ENCODE measurements at regions of chr4 and their contacts with region 1.

Region 1: GRCh38 chr4:26325191-26325590 is 4.4 kb downstream of the RBPJ start:
- DNase-seq: no peak
- H3K4me3 ChIP-seq: no peak overlapping the region
- H3K27ac ChIP-seq: no peak overlapping the region
- H3K4me1 ChIP-seq: peaks cover 23% of the 10 kb centered on the region; the same call in 1 of the 2 replicates
- H3K27me3 ChIP-seq: no peaks in the 10 kb centered on the region
- CTCF ChIP-seq: peak; percentile 50; the same call in 1 of the 2 replicates

Region 2: GRCh38 chr4:26061248-26061986 is 263.8 kb before region 1 on chr4:
- CTCF ChIA-PET with region 1: no interaction called
- POLR2A ChIA-PET with region 1: no interaction called
- intact Hi-C with region 1: loop called (anchors 1 kb)
- DNase-seq: peak; percentile 31 to 41
- H3K4me3 ChIP-seq: no peak overlapping the region
- H3K27ac ChIP-seq: no peak overlapping the region
- H3K4me1 ChIP-seq: no peaks in the 10 kb centered on the region
- H3K27me3 ChIP-seq: no peaks in the 10 kb centered on the region
- CTCF ChIP-seq: peak; percentile 73

Region 3: GRCh38 chr4:26288355-26288909 is 36.8 kb before region 1 on chr4:
- CTCF ChIA-PET with region 1: no interaction called
- POLR2A ChIA-PET with region 1: no interaction called
- intact Hi-C with region 1: no loop called
- DNase-seq: peak; percentile 20 to 90
- H3K4me3 ChIP-seq: peak overlapping the region; percentile 11; the same call in 1 of the 2 replicates
- H3K27ac ChIP-seq: peak overlapping the region; percentile 77
- H3K4me1 ChIP-seq: peaks cover 34% of the 10 kb centered on the region
- H3K27me3 ChIP-seq: no peaks in the 10 kb centered on the region
- CTCF ChIP-seq: no peak

Region 4: DNA sequence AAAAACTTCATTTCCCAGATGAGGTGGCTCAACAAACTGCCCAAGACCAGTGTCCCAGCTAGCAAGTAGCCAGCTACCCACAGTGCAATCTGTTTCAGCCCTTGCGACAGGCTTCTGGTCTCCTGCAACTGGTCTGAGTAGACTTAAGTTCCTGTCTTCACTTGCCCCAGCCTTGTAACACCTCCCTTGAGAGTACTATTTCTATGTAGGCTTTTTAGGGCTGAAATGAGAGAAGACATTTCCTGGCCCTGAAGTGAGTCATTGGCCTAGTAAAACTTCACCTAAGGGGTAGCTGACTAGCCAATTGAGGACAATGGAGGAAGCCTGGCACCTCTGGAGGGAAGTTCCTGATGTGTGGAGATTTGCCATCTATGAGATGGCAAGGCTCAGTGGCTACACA is 455.3 kb after region 1 on chr4:
- CTCF ChIA-PET with region 1: no interaction called
- POLR2A ChIA-PET with region 1: no interaction called
- intact Hi-C with region 1: no loop called
- DNase-seq: no peak
- H3K4me3 ChIP-seq: no peak overlapping the region
- H3K27ac ChIP-seq: no peak overlapping the region
- H3K4me1 ChIP-seq: no peaks in the 10 kb centered on the region
- H3K27me3 ChIP-seq: no peaks in the 10 kb centered on the region
- CTCF ChIP-seq: no peak